Naive thymus-derived CD4-positive, alpha-beta T cell (primary cell): ENCODE measurements at regions of chr4 and their contacts with region 1.

Region 1: DNA sequence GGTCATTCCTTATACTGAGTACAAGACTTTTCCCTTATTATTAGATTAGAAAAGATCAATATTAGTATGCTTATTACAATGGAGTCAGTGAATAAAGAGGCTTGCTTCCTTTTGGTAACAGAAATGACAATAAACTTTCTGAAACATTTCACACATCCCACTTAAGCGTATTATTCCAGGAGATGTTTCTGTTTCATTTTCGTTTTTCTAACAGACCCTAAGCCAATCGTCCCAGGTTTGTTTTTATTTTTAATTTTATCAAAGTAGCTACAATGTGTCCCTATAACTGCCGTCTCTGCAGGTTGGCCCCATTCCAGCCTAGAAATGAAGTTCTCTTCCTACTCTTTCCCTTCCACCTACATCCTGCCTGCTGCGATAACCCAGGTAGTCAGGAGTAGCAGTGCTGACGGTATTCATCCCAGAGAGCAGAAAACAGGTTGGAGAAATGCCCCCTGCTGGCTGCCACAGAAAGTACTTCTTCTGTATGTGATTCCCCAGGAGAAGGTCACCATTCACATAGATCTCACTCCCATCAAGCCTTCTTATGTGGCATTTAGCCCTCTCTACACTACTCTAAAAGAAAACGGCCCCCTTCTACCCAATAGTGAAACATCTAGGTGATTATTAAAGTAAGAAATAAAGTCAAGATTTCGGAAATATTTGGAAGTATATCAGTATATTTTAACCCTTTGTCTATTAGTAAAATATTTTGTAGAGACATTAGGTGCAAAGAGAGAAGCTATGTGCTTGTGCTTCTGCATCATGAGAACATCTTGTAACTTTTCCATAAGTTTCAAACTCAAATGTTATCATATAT is 40.4 kb downstream of the ENPEP start:
- DNase-seq: peak; percentile 29 to 67 (median 61)
- ATAC-seq: peak; percentile 91
- H3K4me3 ChIP-seq: peak overlapping the region; percentile 66
- H3K4me3 Mint-ChIP-seq: peak overlapping the region; percentile 84 to 99 (median 91)
- H3K27ac ChIP-seq: peak overlapping the region; percentile 58
- H3K27ac Mint-ChIP-seq: peak overlapping the region in 8 of 9 donors; percentile 7 to 79 (median 29)
- H3K4me1 ChIP-seq: peaks cover 0 to 5% of the 10 kb centered on the region in 2 donors
- H3K4me1 Mint-ChIP-seq: peaks cover 7 to 16% (median 11%) of the 10 kb centered on the region in 7 donors
- H3K27me3 ChIP-seq: no peaks in the 10 kb centered on the region
- H3K27me3 Mint-ChIP-seq: peaks cover 1 to 13% (median 5%) of the 10 kb centered on the region in 5 donors

Region 2: DNA sequence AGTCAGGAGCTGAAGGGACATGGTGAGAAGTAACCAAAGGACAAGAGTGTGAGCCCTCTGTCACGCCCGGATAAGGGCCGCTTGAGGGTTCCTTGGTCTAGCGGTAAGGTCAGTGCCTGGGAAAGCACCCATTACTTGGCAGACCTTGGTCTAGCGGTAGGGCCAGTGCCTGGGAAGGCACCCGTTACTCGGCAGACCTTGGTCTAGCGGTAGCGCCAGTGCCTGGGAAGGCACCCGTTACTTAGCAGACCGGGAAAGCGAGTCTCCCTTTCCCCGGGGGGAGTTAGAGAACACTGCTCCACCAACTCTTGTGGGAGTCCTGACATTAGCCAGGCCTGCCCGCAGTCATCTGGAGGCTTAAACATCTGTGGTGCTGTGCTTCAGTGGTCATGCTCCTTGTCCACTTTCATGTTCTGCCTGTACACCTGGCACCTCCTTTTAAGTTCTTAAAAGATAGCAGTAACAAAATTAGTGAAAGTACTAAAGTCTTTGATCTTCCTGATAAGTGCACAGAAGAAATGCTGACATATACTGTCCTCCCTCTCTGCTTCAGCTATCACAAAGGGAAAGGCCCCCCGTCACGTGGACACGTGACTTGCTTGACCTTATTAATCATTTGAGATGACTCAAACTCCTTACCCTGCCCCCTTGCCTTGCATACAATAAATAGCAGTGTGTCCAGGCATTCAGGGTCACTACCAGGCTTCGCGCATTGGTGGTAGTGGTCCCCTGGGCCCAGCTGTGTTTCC is 1092.0 kb before region 1 on chr4:
- CTCF ChIA-PET with region 1: no interaction called
- POLR2A ChIA-PET with region 1: no interaction called
- intact Hi-C with region 1: loop called (anchors 1 to 5 kb)
- DNase-seq: no peak
- ATAC-seq: no peak
- H3K4me3 ChIP-seq: no peak overlapping the region
- H3K4me3 Mint-ChIP-seq: no peak overlapping the region
- H3K27ac ChIP-seq: no peak overlapping the region
- H3K27ac Mint-ChIP-seq: no peak overlapping the region
- H3K4me1 ChIP-seq: no peaks in the 10 kb centered on the region
- H3K4me1 Mint-ChIP-seq: peaks cover 4 to 7% (median 5%) of the 10 kb centered on the region in 7 donors
- H3K27me3 ChIP-seq: no peaks in the 10 kb centered on the region
- H3K27me3 Mint-ChIP-seq: peaks cover 0 to 10% (median 0%) of the 10 kb centered on the region in 5 donors

Region 3: GRCh38 chr4:110005461-110006056 is 510.8 kb before region 1 on chr4:
- CTCF ChIA-PET with region 1: interaction called, 111 read pairs
- POLR2A ChIA-PET with region 1: no interaction called
- intact Hi-C with region 1: loop called (anchors 1 kb)
- DNase-seq: peak in 7 of 9 donors; percentile 26 to 62 (median 51)
- ATAC-seq: peak; percentile 86
- H3K4me3 ChIP-seq: no peak overlapping the region
- H3K4me3 Mint-ChIP-seq: no peak overlapping the region
- H3K27ac ChIP-seq: no peak overlapping the region
- H3K27ac Mint-ChIP-seq: no peak overlapping the region
- H3K4me1 ChIP-seq: no peaks in the 10 kb centered on the region
- H3K4me1 Mint-ChIP-seq: peaks cover 0 to 32% (median 0%) of the 10 kb centered on the region in 7 donors
- H3K27me3 ChIP-seq: no peaks in the 10 kb centered on the region
- H3K27me3 Mint-ChIP-seq: peaks cover 0 to 25% (median 6%) of the 10 kb centered on the region in 5 donors

Region 4: GRCh38 chr4:110211007-110211769 is 305.1 kb before region 1 on chr4:
- CTCF ChIA-PET with region 1: interaction called, 3 read pairs
- POLR2A ChIA-PET with region 1: no interaction called
- intact Hi-C with region 1: loop called (anchors 1 to 2 kb)
- DNase-seq: peak in 7 of 9 donors; percentile 15 to 59 (median 45)
- ATAC-seq: peak; percentile 78
- H3K4me3 ChIP-seq: no peak overlapping the region
- H3K4me3 Mint-ChIP-seq: peak overlapping the region in 2 of 10 donors; percentile 25 to 29
- H3K27ac ChIP-seq: no peak overlapping the region
- H3K27ac Mint-ChIP-seq: peak overlapping the region in 1 of 9 donors; percentile 25
- H3K4me1 ChIP-seq: no peaks in the 10 kb centered on the region
- H3K4me1 Mint-ChIP-seq: peaks cover 0 to 5% (median 0%) of the 10 kb centered on the region in 7 donors
- H3K27me3 ChIP-seq: no peaks in the 10 kb centered on the region
- H3K27me3 Mint-ChIP-seq: peaks cover 0 to 7% (median 0%) of the 10 kb centered on the region in 5 donors

Region 5: DNA sequence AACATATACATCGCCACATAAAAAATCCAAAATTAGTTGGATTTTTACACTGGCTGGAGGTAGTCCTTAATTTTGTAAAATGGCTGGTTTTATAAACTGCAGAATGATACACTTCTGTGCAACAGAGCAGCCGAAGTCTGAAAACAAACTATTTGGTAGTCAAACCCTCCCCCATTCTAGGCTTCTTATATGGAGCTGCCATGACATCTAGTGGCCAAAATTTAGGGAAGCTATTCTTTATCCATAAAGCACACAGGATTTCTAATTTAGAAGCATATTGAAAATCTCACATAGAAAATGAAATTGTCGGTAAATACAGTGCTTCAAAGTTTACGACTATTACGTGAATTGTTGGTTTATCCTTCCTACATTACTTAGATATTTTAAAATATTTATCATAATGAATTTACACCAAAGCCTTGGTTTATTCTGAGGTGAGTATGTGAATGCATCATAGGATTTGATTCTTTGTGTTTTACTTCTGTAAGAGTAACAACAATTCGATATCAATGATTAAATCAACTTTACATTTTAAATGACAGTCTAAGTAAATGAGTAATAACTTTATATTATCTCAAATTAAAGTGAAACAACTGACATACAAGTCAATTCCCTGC is 1515.5 kb after region 1 on chr4:
- CTCF ChIA-PET with region 1: no interaction called
- POLR2A ChIA-PET with region 1: no interaction called
- intact Hi-C with region 1: loop called in 1 of 2 experiments (anchors 10 kb)
- DNase-seq: no peak
- ATAC-seq: no peak
- H3K4me3 ChIP-seq: no peak overlapping the region
- H3K4me3 Mint-ChIP-seq: no peak overlapping the region
- H3K27ac ChIP-seq: no peak overlapping the region
- H3K27ac Mint-ChIP-seq: no peak overlapping the region
- H3K4me1 ChIP-seq: no peaks in the 10 kb centered on the region
- H3K4me1 Mint-ChIP-seq: no peaks in the 10 kb centered on the region
- H3K27me3 ChIP-seq: peaks cover 0 to 5% of the 10 kb centered on the region in 2 donors
- H3K27me3 Mint-ChIP-seq: peaks cover 23 to 46% (median 30%) of the 10 kb centered on the region in 5 donors